Heart left ventricle (tissue), 16 donors: ENCODE measurements at regions of chr6 and their contacts with region 1.

Region 1: GRCh38 chr6:52263709-52264540 is 19.6 kb upstream of the IL17F start:
- DNase-seq: peak; percentile 38 to 69 (median 46)
- ATAC-seq: peak in 3 of 4 donors; percentile 53 to 76 (median 59)
- H3K4me3 ChIP-seq: no peak overlapping the region
- H3K27ac ChIP-seq: no peak overlapping the region
- H3K4me1 ChIP-seq: no peaks in the 10 kb centered on the region
- H3K27me3 ChIP-seq: no peaks in the 10 kb centered on the region
- CTCF ChIP-seq: peak; percentile 84 to 97 (median 92)
- POLR2A ChIP-seq: no peak

Region 2: DNA sequence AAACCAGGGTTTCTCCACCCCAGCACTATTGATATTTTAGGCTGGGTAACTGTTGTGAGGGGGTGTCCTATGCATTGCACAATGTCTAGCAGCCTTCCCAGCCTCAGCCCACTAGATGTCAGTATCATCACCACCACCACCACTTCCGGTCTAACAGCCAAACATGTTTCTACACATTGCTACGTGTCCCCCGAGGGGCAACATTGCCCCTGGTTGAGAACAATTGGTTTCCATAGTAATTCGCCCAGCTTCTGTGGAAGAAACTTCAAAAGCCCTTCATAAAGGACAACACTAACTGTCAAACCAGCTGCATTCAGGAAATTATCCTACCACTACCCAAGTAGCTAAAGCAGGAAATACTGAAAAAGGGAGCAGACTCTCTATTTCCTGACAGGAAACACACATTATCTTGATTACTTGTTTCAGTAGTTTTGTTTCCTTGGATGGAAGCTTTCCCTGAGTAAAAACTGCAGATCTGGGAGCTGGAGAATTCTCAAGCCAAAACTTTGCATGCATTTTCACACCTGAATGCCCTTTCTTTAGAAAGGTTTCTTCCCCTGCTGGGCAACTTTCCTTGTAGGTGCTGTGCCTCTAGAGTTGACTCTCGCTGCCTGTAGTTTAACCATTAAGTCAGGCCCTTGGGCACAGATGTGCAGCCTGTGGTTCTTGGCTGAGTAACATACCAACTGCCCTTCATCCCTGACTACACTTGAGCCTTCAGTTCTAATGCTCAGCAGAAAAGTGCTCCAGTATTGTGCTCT is 200.2 kb before region 1 on chr6:
- intact Hi-C with region 1: loop called in 1 of 10 experiments (anchors 5 kb)
- DNase-seq: peak in 2 of 5 donors; percentile 8 to 30
- ATAC-seq: peak in 2 of 4 donors; percentile 60 to 62
- H3K4me3 ChIP-seq: peak overlapping the region in 1 of 12 donors; percentile 13
- H3K27ac ChIP-seq: no peak overlapping the region
- H3K4me1 ChIP-seq: peaks cover 0 to 8% (median 0%) of the 10 kb centered on the region in 12 donors
- H3K27me3 ChIP-seq: peaks cover 0 to 5% (median 0%) of the 10 kb centered on the region in 9 donors
- CTCF ChIP-seq: peak in 6 of 12 donors; percentile 8 to 50 (median 30)
- POLR2A ChIP-seq: no peak

Region 3: GRCh38 chr6:52108128-52108527 is 155.8 kb before region 1 on chr6:
- intact Hi-C with region 1: loop called in 1 of 10 experiments (anchors 10 kb)
- DNase-seq: no peak
- ATAC-seq: no peak
- H3K4me3 ChIP-seq: no peak overlapping the region
- H3K27ac ChIP-seq: no peak overlapping the region
- H3K4me1 ChIP-seq: no peaks in the 10 kb centered on the region
- H3K27me3 ChIP-seq: peaks cover 0 to 6% (median 0%) of the 10 kb centered on the region in 9 donors
- CTCF ChIP-seq: no peak
- POLR2A ChIP-seq: no peak

Region 4: GRCh38 chr6:52162940-52163908 is 100.7 kb before region 1 on chr6:
- intact Hi-C with region 1: loop called in 1 of 10 experiments (anchors 10 kb)
- DNase-seq: no peak
- ATAC-seq: no peak
- H3K4me3 ChIP-seq: no peak overlapping the region
- H3K27ac ChIP-seq: no peak overlapping the region
- H3K4me1 ChIP-seq: no peaks in the 10 kb centered on the region
- H3K27me3 ChIP-seq: peaks cover 0 to 5% (median 0%) of the 10 kb centered on the region in 9 donors
- CTCF ChIP-seq: peak; percentile 19 to 57 (median 38)
- POLR2A ChIP-seq: no peak